Heart left ventricle (tissue), 16 donors: ENCODE measurements at regions of chr14 and their contacts with region 1.

Region 1: GRCh38 chr14:34081576-34082136 is 130.8 kb upstream of the EGLN3 start:
- DNase-seq: no peak
- ATAC-seq: peak; percentile 67 to 81 (median 80)
- H3K4me3 ChIP-seq: no peak overlapping the region
- H3K27ac ChIP-seq: peak overlapping the region; percentile 77 to 100 (median 92)
- H3K4me1 ChIP-seq: peaks cover 0 to 44% (median 11%) of the 10 kb centered on the region in 12 donors
- H3K27me3 ChIP-seq: no peaks in the 10 kb centered on the region
- CTCF ChIP-seq: no peak
- POLR2A ChIP-seq: no peak

Region 2: GRCh38 chr14:33692762-33693161 is 388.9 kb before region 1 on chr14:
- intact Hi-C with region 1: no loop called
- DNase-seq: no peak
- ATAC-seq: no peak
- H3K4me3 ChIP-seq: no peak overlapping the region
- H3K27ac ChIP-seq: no peak overlapping the region
- H3K4me1 ChIP-seq: no peaks in the 10 kb centered on the region
- H3K27me3 ChIP-seq: no peaks in the 10 kb centered on the region
- CTCF ChIP-seq: no peak
- POLR2A ChIP-seq: no peak

Region 3: DNA sequence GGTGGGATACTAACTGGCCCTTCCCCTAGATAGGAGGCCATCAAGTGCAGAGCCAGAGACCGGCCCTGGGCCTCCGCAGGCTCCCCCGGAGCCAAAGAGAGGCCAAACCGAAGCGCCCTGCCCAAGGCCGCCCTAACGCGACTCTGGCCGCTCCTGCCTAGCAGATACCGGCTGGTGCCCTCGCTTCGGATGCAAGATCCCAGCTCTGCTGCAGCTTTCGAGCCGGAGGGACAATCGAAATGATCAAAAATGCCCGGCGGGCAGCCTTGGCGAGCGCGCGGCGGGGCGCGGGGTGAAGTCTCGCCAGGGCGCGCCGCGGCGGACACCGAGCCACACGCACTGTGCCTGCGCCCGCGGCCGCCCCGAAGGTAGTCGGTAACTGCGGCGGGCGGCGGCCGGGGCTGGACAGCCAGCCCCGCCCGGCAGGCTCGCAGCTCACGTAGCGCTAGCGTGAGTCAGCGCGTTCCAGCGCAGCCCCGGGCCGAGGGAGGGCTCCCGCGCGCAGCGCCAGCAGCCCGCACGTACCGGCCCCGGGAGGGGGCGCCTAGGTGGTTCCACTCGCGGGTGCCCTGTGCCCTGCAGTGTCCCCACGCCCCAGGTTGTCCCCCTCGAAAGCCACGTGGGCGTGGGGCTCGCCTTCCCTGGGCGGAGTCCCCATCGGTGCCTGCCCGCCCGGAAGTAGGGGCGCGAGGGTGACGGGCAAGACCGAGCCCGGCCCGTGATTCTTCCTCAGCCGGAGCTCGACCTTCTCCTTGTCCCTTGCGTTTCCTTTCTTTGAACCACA is 21.6 kb before region 1 on chr14:
- intact Hi-C with region 1: loop called in 2 of 10 experiments (anchors 1 to 2 kb)
- DNase-seq: peak; percentile 83 to 91 (median 87)
- ATAC-seq: peak; percentile 57 to 96 (median 93)
- H3K4me3 ChIP-seq: peak overlapping the region; percentile 37 to 82 (median 64)
- H3K27ac ChIP-seq: peak overlapping the region; percentile 83 to 98 (median 95)
- H3K4me1 ChIP-seq: peaks cover 0 to 43% (median 29%) of the 10 kb centered on the region in 12 donors
- H3K27me3 ChIP-seq: no peaks in the 10 kb centered on the region
- CTCF ChIP-seq: peak; percentile 6 to 54 (median 38)
- POLR2A ChIP-seq: peak; percentile 24 to 76